ENCODE measurements at regions of chr15 and their contacts with region 1.

Region 1: DNA sequence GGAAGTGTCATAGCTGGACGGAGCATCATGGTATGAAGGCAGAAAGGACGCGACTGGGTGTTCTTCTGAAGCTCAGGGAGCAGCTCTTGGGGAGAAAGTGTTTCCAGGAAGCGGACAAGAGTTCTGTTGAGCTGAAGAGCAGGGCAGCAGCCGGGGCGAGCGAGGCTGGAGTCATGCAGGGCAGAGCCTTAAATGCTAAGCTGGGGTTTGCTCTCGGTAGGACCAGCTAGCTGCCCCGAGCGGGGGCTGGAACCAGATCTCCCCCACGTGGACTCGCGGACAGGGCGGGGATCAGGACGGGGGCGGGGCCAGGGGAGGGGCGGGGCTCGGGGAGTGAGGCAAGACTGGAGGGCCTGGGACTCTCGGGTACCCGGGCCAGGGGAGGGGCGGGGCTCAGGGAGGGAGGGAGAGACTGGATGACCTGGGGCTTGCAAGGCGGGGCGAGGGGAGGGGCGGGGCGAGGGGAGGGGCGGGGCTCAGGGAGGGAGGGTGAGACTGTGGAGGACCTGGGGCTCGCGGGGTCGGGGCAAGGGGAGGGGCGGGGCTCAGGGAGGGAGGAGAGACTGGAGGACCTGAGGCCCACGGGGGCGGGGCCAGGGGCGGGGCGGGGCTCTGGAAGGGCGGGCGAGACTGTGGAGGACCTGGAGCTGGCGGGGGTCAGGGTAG is 486 bp upstream of the FAH start:
- DNase-seq: peak; percentile 93
- H3K4me3 Mint-ChIP-seq: peak overlapping the region; percentile 97
- H3K27ac Mint-ChIP-seq: peak overlapping the region; percentile 82
- H3K4me1 Mint-ChIP-seq: peaks cover 33% of the 10 kb centered on the region
- H3K27me3 Mint-ChIP-seq: peaks cover 10% of the 10 kb centered on the region

Region 2: GRCh38 chr15:79896637-79897379 is 255.5 kb before region 1 on chr15 and contains the start of gene MTHFS:
- intact Hi-C with region 1: loop called (anchors 10 kb)
- DNase-seq: peak; percentile 94
- H3K4me3 Mint-ChIP-seq: peak within 1 kb of the TSS; percentile 98
- H3K27ac Mint-ChIP-seq: peak within 1 kb of the TSS; percentile 100
- H3K4me1 Mint-ChIP-seq: peaks cover 36% of the 10 kb centered on the region
- H3K27me3 Mint-ChIP-seq: no peaks in the 10 kb centered on the region
- total RNA-seq, gene MTHFS: 34.5 and 35.3 TPM in 2 replicates

Region 3: DNA sequence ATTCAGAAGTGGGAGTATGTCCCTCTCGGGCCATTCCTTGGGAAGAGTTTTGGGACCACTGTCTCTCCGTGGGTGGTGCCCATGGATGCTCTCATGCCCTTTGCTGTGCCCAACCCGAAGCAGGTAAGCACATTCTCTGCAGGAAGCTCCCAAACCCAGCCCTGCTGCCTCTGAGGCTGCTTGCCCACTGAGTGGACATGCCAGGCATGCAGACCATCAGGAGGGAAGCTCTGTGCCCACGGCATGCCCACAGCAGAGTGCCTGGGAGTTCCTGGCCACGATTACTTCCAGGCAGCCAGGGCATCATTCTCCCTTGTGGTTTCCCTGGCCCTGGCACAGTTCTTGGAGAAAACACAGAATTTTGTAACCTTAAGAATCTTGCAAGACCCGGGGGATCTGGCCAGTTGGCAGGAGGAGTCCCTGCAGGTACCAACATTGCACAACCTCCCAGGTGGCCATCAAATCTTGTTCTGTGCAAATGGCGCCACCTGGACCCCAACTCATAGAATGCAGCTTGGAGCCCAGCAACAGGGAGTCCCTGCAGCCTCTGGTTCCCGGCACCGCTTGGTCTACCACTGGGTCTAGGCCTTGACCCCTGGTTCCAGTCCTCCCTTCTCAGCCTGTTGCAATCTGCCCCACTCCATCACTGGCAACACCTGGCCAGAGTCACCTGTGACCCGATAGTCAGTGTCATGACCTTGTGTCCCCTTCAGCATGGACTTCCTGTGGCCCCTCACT is 20.9 kb after region 1 on chr15:
- intact Hi-C with region 1: loop called (anchors 2 kb)
- DNase-seq: peak; percentile 92
- H3K4me3 Mint-ChIP-seq: no peak overlapping the region
- H3K27ac Mint-ChIP-seq: no peak overlapping the region
- H3K4me1 Mint-ChIP-seq: no peaks in the 10 kb centered on the region
- H3K27me3 Mint-ChIP-seq: no peaks in the 10 kb centered on the region